Breast epithelium (tissue), 4 donors: ENCODE measurements at regions of chr4 and their contacts with region 1.

Region 1: DNA sequence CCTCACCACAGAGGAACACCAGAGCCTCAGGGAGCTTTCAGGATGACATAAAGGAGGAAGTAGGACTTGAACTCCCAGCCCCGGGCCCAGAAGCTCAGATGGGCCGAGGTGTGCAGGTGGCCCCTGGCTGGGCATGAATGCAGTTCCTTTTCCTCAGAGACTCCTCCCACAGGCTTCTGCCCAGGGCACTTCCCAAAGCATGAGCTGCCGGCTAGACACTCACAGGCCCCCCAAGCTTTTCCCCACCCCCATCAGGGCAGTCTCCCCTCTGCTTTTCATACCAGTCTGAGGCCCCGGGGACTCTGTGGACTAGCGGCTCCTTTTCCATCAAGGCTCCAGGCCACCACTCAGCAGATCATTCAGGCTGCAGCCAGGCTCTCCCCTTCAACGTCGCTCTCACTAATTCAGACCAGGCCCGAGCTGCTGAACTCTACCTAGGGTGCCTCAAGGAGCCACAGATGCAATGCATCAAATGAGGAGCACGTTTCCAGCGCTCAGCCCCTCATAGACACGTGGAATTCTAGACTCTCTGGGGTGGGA is 36.9 kb downstream of the HMX1 start:
- DNase-seq: peak in 1 of 2 donors; percentile 15
- H3K4me3 ChIP-seq: no peak overlapping the region
- H3K27ac ChIP-seq: no peak overlapping the region
- H3K4me1 ChIP-seq: no peaks in the 10 kb centered on the region
- H3K27me3 ChIP-seq: peaks cover 0 to 9% of the 10 kb centered on the region in 2 donors
- CTCF ChIP-seq: no peak
- POLR2A ChIP-seq: no peak

Region 2: GRCh38 chr4:8905773-8906667 is 71.3 kb after region 1 on chr4:
- intact Hi-C with region 1: loop called (anchors 2 kb)
- DNase-seq: peak in 1 of 2 donors; percentile 45
- H3K4me3 ChIP-seq: no peak overlapping the region
- H3K27ac ChIP-seq: no peak overlapping the region
- H3K4me1 ChIP-seq: no peaks in the 10 kb centered on the region
- H3K27me3 ChIP-seq: peaks cover 0 to 55% of the 10 kb centered on the region in 2 donors
- CTCF ChIP-seq: no peak
- POLR2A ChIP-seq: no peak